Activated CD4-positive, alpha-beta T cell treated with anti-CD3 and anti-CD28 coated beads for 36 hours (primary cell): ENCODE measurements at regions of chr15 and their contacts with region 1.

Region 1: GRCh38 chr15:78077058-78077877 is at the start of gene TBC1D2B:
- DNase-seq: peak; percentile 86
- ATAC-seq: peak; percentile 76
- H3K4me3 Mint-ChIP-seq: peak within 1 kb of the TSS; percentile 95
- H3K27ac Mint-ChIP-seq: peak within 1 kb of the TSS; percentile 93
- H3K4me1 Mint-ChIP-seq: peaks cover 44% of the 10 kb centered on the region
- H3K27me3 Mint-ChIP-seq: no peaks in the 10 kb centered on the region
- total RNA-seq, gene TBC1D2B: 49.3 to 52.0 TPM

Region 2: DNA sequence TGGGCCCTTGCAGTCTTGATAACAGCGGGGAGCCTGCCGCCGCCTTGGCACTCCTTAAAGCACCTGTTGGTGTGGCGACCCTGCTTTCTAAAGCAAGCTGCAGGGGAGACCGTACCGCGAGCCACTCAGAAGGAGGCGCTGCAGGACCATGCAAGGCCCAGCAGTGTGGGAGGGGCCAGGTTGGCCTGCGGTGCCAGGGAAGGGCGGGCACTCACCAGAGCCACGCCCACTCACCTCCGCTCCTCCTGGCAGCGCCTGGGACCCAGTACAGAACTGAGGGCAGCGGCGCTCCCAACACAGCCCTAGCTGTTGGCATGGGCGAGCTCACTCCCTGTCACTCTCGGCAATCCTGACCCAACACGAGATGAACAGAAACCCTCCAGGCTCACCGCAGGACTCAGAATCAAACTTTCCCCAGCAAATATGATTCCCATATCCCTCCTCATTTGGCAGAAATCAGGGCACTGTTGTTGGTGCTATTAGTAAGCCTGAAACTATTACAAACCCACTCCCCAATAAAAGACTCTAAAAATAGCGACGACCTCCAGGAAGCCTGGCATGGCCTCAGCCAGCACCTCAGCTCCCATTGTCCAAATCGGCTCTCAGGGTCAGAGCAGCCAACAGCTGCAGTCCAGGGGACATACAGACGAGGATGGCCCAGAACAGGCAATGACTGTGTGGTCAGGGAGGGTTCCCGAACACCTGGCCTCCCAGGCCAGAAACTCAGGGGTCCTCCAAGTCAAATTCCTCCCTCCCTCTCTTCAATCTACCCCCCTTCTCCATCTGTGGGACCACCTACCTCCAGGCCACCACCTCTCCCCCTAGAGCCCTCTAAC is 77.0 kb before region 1 on chr15:
- CTCF ChIA-PET with region 1: interaction called, 4 read pairs
- POLR2A ChIA-PET with region 1: no interaction called
- intact Hi-C with region 1: loop called in 1 of 2 experiments (anchors 1 kb)
- DNase-seq: peak; percentile 92
- ATAC-seq: peak; percentile 98
- H3K4me3 Mint-ChIP-seq: no peak overlapping the region
- H3K27ac Mint-ChIP-seq: peak overlapping the region; percentile 1
- H3K4me1 Mint-ChIP-seq: peaks cover 8% of the 10 kb centered on the region
- H3K27me3 Mint-ChIP-seq: no peaks in the 10 kb centered on the region

Region 3: GRCh38 chr15:78034495-78035191 is 42.6 kb before region 1 on chr15:
- CTCF ChIA-PET with region 1: interaction called, 10 read pairs
- POLR2A ChIA-PET with region 1: interaction called, 6 read pairs
- intact Hi-C with region 1: loop called (anchors 1 kb)
- DNase-seq: peak; percentile 95
- ATAC-seq: peak; percentile 88
- H3K4me3 Mint-ChIP-seq: peak overlapping the region; percentile 50
- H3K27ac Mint-ChIP-seq: peak overlapping the region; percentile 86
- H3K4me1 Mint-ChIP-seq: peaks cover 89% of the 10 kb centered on the region
- H3K27me3 Mint-ChIP-seq: no peaks in the 10 kb centered on the region

Region 4: DNA sequence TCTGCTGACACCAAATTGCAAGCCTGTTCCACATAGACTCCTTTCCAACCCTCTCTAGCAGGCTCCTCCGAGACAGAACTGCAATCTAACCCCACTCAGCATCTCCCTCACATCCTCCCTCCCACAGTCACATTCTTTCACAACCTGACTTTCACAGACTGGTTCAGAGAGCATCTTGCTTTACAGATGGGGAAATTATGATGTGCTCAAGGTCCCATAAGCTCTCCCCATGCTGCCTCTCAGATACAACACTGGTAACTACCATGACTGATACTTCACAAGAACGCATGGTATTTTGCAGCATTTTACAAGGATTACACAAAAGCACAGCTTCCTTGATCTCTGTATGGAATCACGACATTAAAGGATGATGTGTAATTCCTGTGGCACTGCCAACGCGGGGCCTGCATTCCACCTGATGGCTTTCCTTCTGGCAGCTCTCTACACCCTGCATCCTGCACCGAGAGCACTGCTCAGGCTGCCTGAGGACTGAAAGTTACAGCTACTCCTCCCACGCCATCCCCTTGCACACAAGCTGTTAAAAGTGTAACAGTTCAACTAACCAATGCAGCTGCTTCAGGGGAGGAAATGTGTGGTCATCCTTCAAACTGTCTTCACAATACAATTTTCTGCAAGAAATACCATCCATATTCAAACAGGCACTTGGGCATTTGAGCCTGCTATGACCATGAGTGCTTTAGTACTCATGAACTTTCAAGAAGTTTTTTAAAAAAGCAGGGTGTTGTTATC is 27.4 kb before region 1 on chr15:
- CTCF ChIA-PET with region 1: interaction called, 7 read pairs
- POLR2A ChIA-PET with region 1: interaction called, 3 read pairs
- intact Hi-C with region 1: loop called in 1 of 2 experiments (anchors 2 kb)
- DNase-seq: peak; percentile 86
- ATAC-seq: peak; percentile 63
- H3K4me3 Mint-ChIP-seq: peak overlapping the region; percentile 54
- H3K27ac Mint-ChIP-seq: peak overlapping the region; percentile 90
- H3K4me1 Mint-ChIP-seq: peaks cover 97% of the 10 kb centered on the region
- H3K27me3 Mint-ChIP-seq: no peaks in the 10 kb centered on the region

Region 5: DNA sequence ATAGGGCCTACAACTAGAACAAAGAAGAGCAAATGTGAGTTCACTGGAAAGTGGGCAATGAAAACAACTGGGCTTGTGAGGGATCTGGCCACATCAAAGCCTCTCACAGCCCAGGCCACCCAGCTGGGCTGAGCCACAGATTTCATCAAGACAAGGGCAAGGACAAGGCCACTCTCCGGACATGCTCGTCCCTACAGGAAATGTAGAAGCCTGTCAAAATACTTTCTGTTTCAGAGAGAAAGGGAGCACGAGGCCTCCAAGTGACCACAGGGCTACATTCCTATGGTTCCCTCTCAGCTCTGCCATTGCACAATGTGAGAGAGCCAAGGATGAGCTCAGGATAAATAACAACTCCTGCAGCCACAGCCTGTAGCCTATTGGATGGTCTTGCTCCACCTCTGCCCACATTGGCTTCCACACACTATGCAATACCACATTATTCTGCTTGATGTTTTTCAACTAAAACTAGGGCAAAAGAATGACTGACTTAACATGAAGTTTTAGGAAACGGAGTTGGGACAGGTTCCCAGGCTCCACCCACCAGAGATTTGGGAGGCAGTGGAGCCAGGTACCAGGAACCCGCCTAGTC is 11.9 kb before region 1 on chr15:
- CTCF ChIA-PET with region 1: interaction called, 6 read pairs
- POLR2A ChIA-PET with region 1: interaction called, 6 read pairs
- intact Hi-C with region 1: loop called in 1 of 2 experiments (anchors 1 kb)
- DNase-seq: peak; percentile 16
- ATAC-seq: no peak
- H3K4me3 Mint-ChIP-seq: no peak overlapping the region
- H3K27ac Mint-ChIP-seq: no peak overlapping the region
- H3K4me1 Mint-ChIP-seq: peaks cover 14% of the 10 kb centered on the region
- H3K27me3 Mint-ChIP-seq: no peaks in the 10 kb centered on the region

Region 6: GRCh38 chr15:78120523-78120922 is 43.3 kb after region 1 on chr15:
- CTCF ChIA-PET with region 1: no interaction called
- POLR2A ChIA-PET with region 1: no interaction called
- intact Hi-C with region 1: no loop called
- DNase-seq: no peak
- ATAC-seq: no peak
- H3K4me3 Mint-ChIP-seq: no peak overlapping the region
- H3K27ac Mint-ChIP-seq: no peak overlapping the region
- H3K4me1 Mint-ChIP-seq: no peaks in the 10 kb centered on the region
- H3K27me3 Mint-ChIP-seq: no peaks in the 10 kb centered on the region

Region 7: GRCh38 chr15:78299101-78299930 is 222.0 kb after region 1 on chr15 and contains the start of gene SKIC8:
- CTCF ChIA-PET with region 1: no interaction called
- POLR2A ChIA-PET with region 1: interaction called, 9 read pairs
- intact Hi-C with region 1: loop called in 1 of 2 experiments (anchors 1 kb)
- DNase-seq: peak; percentile 95
- ATAC-seq: peak; percentile 96
- H3K4me3 Mint-ChIP-seq: peak within 1 kb of the TSS; percentile 96
- H3K27ac Mint-ChIP-seq: peak within 1 kb of the TSS; percentile 91
- H3K4me1 Mint-ChIP-seq: peaks cover 29% of the 10 kb centered on the region
- H3K27me3 Mint-ChIP-seq: no peaks in the 10 kb centered on the region
- total RNA-seq, gene SKIC8: 39.2 to 52.6 TPM

Region 8: DNA sequence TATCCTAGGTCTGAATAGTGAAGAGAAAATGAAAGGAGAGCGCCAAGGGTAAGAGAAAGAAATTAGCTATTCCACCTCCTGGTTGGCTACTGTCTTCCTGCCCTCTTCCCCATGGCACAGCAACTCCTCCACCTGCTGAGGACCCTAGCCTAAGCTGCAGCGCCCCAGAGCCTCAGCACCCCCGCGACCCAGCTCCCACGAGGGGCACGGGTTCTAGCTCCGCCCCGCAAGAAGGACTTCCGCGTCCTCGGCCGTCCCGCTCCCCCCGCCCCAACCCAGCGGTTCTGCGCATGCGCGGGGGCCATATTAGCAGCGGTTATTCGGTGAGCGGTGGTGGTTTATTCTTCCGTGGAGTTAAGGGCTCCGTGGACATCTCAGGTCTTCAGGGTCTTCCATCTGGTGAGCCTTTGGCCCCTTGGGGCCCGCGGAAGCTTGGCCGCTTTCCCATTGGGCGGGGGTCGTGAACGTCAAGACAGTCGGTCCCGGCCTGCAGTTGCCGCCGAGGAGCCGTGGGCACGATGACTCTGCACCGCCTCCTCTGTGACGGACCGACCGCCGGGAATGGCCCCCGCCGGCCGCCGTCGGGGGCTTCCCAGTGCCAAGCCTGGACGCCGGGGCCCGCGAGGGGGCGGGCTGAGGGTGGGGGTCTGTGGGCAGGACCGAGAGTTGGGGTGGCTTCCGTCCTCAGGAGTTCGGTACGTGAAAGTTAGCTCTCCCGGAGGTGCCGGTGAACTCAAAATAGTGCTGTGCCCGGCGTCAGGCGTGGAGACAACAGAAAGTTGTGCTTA is 463.1 kb after region 1 on chr15 and contains the start of gene PSMA4:
- CTCF ChIA-PET with region 1: no interaction called
- POLR2A ChIA-PET with region 1: no interaction called
- intact Hi-C with region 1: loop called in 1 of 2 experiments (anchors 2 kb)
- DNase-seq: peak; percentile 96
- ATAC-seq: peak; percentile 86
- H3K4me3 Mint-ChIP-seq: peak within 1 kb of the TSS; percentile 91
- H3K27ac Mint-ChIP-seq: peak within 1 kb of the TSS; percentile 98
- H3K4me1 Mint-ChIP-seq: peaks cover 27% of the 10 kb centered on the region
- H3K27me3 Mint-ChIP-seq: no peaks in the 10 kb centered on the region
- total RNA-seq, gene PSMA4: 273 to 312 TPM